Activated CD4-positive, alpha-beta memory T cell treated with anti-CD3 and anti-CD28 coated beads for 36 hours (primary cell): ENCODE measurements at regions of chr17 and their contacts with region 1.

Region 1: DNA sequence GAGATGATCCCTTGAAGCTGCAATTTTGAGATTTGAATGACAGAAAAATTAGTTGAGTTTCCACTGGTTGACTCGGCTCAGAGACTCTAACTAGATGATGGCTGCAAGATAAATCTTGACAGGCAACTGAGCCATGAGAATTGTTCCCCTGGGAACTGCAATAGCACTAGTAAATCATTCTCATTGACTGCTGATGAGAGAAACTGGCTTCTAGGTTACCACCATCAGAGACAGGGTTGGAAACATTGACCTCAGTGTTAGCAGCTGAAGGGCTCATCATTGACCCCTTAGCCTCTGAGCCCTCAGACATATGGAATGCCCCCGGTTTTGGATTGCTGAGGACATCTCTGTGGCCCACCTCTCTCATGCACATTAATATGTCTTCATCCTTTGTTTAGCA is 125.4 kb upstream of the COX10 start:
- DNase-seq: no peak
- H3K4me3 Mint-ChIP-seq: no peak overlapping the region
- H3K27ac Mint-ChIP-seq: no peak overlapping the region
- H3K4me1 Mint-ChIP-seq: no peaks in the 10 kb centered on the region
- H3K27me3 Mint-ChIP-seq: no peaks in the 10 kb centered on the region

Region 2: GRCh38 chr17:13865650-13866049 is 78.3 kb before region 1 on chr17:
- CTCF ChIA-PET with region 1: no interaction called
- POLR2A ChIA-PET with region 1: no interaction called
- intact Hi-C with region 1: loop called (anchors 2 kb)
- DNase-seq: no peak
- H3K4me3 Mint-ChIP-seq: no peak overlapping the region
- H3K27ac Mint-ChIP-seq: no peak overlapping the region
- H3K4me1 Mint-ChIP-seq: no peaks in the 10 kb centered on the region
- H3K27me3 Mint-ChIP-seq: no peaks in the 10 kb centered on the region

Region 3: GRCh38 chr17:13981881-13982280 is 38.0 kb after region 1 on chr17:
- CTCF ChIA-PET with region 1: no interaction called
- POLR2A ChIA-PET with region 1: no interaction called
- intact Hi-C with region 1: no loop called
- DNase-seq: no peak
- H3K4me3 Mint-ChIP-seq: no peak overlapping the region
- H3K27ac Mint-ChIP-seq: no peak overlapping the region
- H3K4me1 Mint-ChIP-seq: no peaks in the 10 kb centered on the region
- H3K27me3 Mint-ChIP-seq: no peaks in the 10 kb centered on the region